Activated CD8-positive, alpha-beta T cell treated with anti-CD3 and anti-CD28 coated beads for 36 hours (primary cell): ENCODE measurements at regions of chr15 and their contacts with region 1.

Region 1: GRCh38 chr15:37452498-37452897 is 352.1 kb upstream of the MEIS2 start:
- DNase-seq: no peak
- ATAC-seq: no peak
- H3K4me3 Mint-ChIP-seq: no peak overlapping the region
- H3K27ac Mint-ChIP-seq: no peak overlapping the region
- H3K4me1 Mint-ChIP-seq: no peaks in the 10 kb centered on the region
- H3K27me3 Mint-ChIP-seq: no peaks in the 10 kb centered on the region
- CTCF ChIP-seq: no peak

Region 2: DNA sequence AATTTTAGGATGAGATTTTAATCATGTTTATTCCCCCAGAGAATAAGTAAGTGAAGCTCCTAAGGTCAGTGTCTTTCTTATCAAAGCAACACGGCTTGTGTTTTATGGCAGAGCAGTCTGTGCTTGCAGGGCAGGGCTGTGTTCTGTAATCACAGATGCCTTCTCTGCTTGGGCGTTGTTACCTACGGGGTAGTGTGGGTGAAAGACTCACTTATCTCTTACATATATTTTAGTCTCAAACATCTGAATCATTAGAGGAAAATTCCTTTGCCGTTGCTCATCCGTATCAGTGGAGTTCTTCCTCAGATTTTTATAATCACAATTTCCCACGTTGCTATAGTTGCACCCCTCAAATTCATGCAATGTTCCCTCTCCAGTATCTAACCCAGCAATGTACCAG is 80.4 kb before region 1 on chr15:
- CTCF ChIA-PET with region 1: no interaction called
- POLR2A ChIA-PET with region 1: no interaction called
- intact Hi-C with region 1: no loop called
- DNase-seq: no peak
- ATAC-seq: no peak
- H3K4me3 Mint-ChIP-seq: no peak overlapping the region
- H3K27ac Mint-ChIP-seq: no peak overlapping the region
- H3K4me1 Mint-ChIP-seq: no peaks in the 10 kb centered on the region
- H3K27me3 Mint-ChIP-seq: no peaks in the 10 kb centered on the region
- CTCF ChIP-seq: no peak

Region 3: GRCh38 chr15:37422995-37423394 is 29.5 kb before region 1 on chr15:
- CTCF ChIA-PET with region 1: no interaction called
- POLR2A ChIA-PET with region 1: no interaction called
- intact Hi-C with region 1: loop called (anchors 5 kb)
- DNase-seq: no peak
- ATAC-seq: no peak
- H3K4me3 Mint-ChIP-seq: no peak overlapping the region
- H3K27ac Mint-ChIP-seq: no peak overlapping the region
- H3K4me1 Mint-ChIP-seq: no peaks in the 10 kb centered on the region
- H3K27me3 Mint-ChIP-seq: no peaks in the 10 kb centered on the region
- CTCF ChIP-seq: no peak